A549 (cell line): ENCODE measurements at regions of chr16 and their contacts with region 1.

Region 1: DNA sequence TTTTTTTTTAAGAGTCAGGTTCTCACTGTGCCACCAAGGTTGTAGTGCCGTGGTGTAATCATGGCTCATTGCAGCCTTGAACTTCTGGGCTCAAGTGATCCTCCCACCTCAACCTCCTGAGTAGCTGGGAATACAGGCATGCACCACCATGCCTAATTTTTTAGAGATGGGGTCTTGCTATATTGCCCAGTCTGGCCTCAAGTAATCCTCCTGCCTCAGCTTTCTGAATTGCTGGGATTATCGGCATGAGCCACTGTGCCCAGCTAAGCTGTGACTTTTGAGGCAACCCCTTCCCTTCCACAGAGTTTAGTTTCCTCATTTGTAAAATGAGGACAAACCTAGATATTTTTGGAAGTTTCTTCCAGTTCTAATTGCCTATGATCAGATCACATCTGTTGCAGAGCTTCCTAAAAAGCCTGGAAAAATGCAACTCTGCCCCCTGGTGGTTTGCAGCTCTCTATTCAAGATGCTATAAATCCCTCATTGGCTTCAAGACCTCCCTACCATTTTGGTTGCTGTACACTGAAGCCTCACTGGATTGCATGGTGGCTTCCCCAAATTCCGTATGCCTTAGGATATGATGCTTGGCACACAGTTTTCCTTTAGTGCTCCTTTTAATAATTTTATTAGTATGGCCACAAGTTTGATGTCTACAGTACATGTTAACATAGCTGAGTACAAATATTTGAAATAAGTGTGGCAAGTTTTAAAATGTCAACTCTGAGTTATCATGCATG is 19.3 kb downstream of the GDE1 start:
- DNase-seq: peak; percentile 71 to 82
- ATAC-seq: peak; percentile 88 to 95
- H3K4me3 ChIP-seq: no peak overlapping the region
- H3K27ac ChIP-seq: no peak overlapping the region
- H3K4me1 ChIP-seq: no peaks in the 10 kb centered on the region
- CTCF ChIP-seq: peak; percentile 92
- EP300 ChIP-seq: no peak
- POLR2A ChIP-seq: no peak
- RAD21 ChIP-seq: peak; percentile 87 to 88

Region 2: DNA sequence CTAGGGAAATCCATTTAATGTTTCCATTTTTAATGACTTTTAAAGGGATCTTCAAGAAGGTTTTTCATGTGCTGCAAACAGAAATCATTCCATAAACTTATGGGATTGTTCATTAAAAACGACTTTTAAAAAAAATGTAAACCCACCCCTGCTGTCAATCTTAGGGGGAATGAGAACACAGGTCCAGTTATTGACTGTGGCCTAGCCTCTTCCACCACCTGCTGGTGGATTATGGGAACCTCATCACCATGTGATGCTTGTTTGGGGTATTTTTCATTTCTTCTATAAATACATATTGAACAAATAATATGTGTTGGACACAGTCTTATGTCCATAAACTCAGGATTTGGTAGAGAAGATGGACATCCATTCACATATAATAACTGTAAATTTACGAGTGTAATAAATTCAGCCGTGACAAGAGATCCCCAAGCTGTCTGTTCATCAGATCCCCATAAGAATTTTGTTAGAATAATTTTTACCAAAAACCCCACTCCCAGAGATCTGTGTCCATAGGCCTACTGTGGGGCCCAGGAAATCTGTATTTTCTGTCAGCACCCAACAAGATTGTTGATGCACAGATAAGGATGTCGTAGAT is 126.9 kb before region 1 on chr16:
- CTCF ChIA-PET with region 1: interaction called, 23 read pairs
- POLR2A ChIA-PET with region 1: no interaction called
- DNase-seq: peak; percentile 70 to 73
- ATAC-seq: peak; percentile 81 to 91; a peak in 5 of 6 replicates
- H3K4me3 ChIP-seq: no peak overlapping the region
- H3K27ac ChIP-seq: no peak overlapping the region
- H3K4me1 ChIP-seq: no peaks in the 10 kb centered on the region
- CTCF ChIP-seq: peak; percentile 98
- EP300 ChIP-seq: no peak
- POLR2A ChIP-seq: no peak
- RAD21 ChIP-seq: peak; percentile 98 to 99

Region 3: DNA sequence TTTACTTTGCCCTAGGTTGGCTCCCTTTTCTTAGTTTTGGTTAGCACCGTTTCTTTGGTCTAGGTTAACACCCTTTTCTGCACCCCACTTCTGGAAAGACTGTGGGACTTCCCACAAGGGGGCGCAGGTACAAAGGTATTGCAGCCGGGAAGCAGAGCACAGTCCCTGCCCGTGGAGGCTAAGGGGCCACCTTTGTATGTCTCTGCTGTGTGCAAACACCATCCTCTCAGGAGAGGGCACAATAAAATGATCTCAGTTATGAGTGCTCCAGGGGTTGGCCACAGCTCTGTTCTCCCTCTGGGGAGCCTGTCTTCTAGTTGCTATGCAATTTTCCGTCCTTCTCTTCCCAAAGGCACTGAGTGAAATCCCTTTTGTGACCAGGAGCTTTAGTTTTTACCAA is 113.3 kb before region 1 on chr16:
- CTCF ChIA-PET with region 1: interaction called, 69 read pairs
- POLR2A ChIA-PET with region 1: interaction called, 5 read pairs
- DNase-seq: peak; percentile 43 to 68
- ATAC-seq: peak; percentile 82 to 86
- H3K4me3 ChIP-seq: no peak overlapping the region
- H3K27ac ChIP-seq: peak overlapping the region in 1 of 2 experiments; percentile 18; a peak in 1 of 6 replicates
- H3K4me1 ChIP-seq: peaks cover 25% of the 10 kb centered on the region
- CTCF ChIP-seq: peak; percentile 82
- EP300 ChIP-seq: no peak
- POLR2A ChIP-seq: no peak
- RAD21 ChIP-seq: peak; percentile 81 to 83

Region 4: DNA sequence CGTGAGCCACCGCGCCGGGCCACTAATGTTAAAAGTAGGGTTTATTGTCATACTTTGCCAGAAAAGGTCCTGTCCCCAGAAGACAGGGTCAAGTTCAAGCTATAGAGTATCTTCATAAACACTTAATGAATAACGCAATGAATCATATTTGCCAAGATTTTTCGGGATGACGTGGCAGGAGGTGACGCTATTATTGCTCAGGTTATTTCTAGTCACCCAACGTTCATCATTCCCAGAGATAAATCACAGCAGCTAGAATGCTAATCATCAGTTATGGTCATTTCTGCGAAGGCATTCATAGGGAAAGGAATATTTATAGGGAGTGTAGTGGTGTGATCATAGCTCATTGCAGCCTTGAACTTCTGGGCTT is 82.9 kb before region 1 on chr16:
- CTCF ChIA-PET with region 1: interaction called, 22 read pairs
- POLR2A ChIA-PET with region 1: no interaction called
- DNase-seq: peak; percentile 91 to 93
- ATAC-seq: peak; percentile 88 to 97
- H3K4me3 ChIP-seq: peak overlapping the region; percentile 31; the same call in 2 of the 3 replicates
- H3K27ac ChIP-seq: peak overlapping the region; percentile 62 to 83
- H3K4me1 ChIP-seq: peaks cover 46% of the 10 kb centered on the region
- CTCF ChIP-seq: no peak
- EP300 ChIP-seq: peak; percentile 61 to 70; a peak in 2 of 5 replicates
- POLR2A ChIP-seq: no peak
- RAD21 ChIP-seq: peak; percentile 14 to 25; a peak in 1 of 5 replicates

Region 5: GRCh38 chr16:19479302-19479721 is 23.3 kb before region 1 on chr16:
- CTCF ChIA-PET with region 1: interaction called, 10 read pairs
- POLR2A ChIA-PET with region 1: no interaction called
- DNase-seq: no peak
- ATAC-seq: no peak
- H3K4me3 ChIP-seq: no peak overlapping the region
- H3K27ac ChIP-seq: peak overlapping the region in 1 of 2 experiments; percentile 52; a peak in 1 of 6 replicates
- H3K4me1 ChIP-seq: peaks cover 21% of the 10 kb centered on the region
- CTCF ChIP-seq: no peak
- EP300 ChIP-seq: no peak
- POLR2A ChIP-seq: no peak
- RAD21 ChIP-seq: no peak

Region 6: GRCh38 chr16:19513377-19514053 is 11.0 kb after region 1 on chr16:
- CTCF ChIA-PET with region 1: interaction called, 31 read pairs
- POLR2A ChIA-PET with region 1: no interaction called
- DNase-seq: no peak
- ATAC-seq: no peak
- H3K4me3 ChIP-seq: no peak overlapping the region
- H3K27ac ChIP-seq: no peak overlapping the region
- H3K4me1 ChIP-seq: peaks cover 28% of the 10 kb centered on the region
- CTCF ChIP-seq: no peak
- EP300 ChIP-seq: no peak
- POLR2A ChIP-seq: no peak
- RAD21 ChIP-seq: no peak

Region 7: GRCh38 chr16:19583665-19584300 is 81.2 kb after region 1 on chr16:
- CTCF ChIA-PET with region 1: no interaction called
- POLR2A ChIA-PET with region 1: no interaction called
- DNase-seq: peak; percentile 30 to 68
- ATAC-seq: peak; percentile 95 to 97; a peak in 5 of 6 replicates
- H3K4me3 ChIP-seq: no peak overlapping the region
- H3K27ac ChIP-seq: no peak overlapping the region
- H3K4me1 ChIP-seq: no peaks in the 10 kb centered on the region
- CTCF ChIP-seq: peak; percentile 92
- EP300 ChIP-seq: no peak
- POLR2A ChIP-seq: no peak
- RAD21 ChIP-seq: peak; percentile 56 to 70